ENCODE measurements at regions of chr13 and their contacts with region 1.

Region 1: DNA sequence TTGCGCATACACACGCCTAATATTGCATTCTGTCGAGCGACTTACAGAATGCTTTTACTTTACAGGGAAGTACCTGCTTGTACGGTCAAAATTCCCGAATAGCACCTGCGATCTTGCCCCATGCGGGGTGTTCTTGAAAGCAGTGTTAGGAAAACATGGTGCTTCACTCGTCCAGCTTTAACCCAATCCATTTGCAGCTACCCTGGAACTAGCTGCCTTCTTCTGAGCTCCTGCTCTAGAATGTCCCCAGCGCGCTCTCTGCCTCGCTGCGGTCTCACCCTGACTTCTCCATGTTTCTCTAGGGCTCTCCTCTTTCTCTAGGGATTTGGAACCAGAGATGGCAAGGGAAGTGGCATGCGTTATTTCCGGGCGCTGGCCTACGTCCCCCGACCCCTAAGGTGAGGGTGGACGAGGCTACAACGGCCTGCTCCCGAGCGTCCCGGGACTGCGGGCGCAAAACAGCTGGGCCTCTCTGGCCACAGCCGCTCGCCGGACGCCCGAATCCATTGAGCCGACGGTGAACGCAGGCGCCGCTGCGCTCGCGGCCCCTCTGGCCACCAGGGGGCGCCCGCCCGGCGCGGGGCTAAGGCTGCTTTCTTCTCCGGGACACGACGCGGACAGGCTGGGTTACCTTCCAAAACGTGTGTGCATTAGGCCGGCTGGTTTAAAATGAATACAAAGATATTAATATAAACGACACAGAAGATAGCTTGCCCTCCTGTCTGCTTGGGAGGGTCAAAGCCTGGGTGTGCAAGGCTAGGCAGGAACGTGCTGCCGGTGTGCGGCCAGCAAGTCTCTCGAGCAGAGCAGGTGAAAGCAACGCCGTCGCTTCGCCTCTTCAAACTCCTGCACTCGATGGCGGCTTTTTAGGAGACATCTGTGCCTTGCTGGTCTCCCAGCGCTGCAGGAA is 1.8 kb upstream of the SPRY2 start:
- DNase-seq: no peak
- H3K4me3 ChIP-seq: peak overlapping the region; percentile 100
- CTCF ChIP-seq: peak; percentile 87

Region 2: DNA sequence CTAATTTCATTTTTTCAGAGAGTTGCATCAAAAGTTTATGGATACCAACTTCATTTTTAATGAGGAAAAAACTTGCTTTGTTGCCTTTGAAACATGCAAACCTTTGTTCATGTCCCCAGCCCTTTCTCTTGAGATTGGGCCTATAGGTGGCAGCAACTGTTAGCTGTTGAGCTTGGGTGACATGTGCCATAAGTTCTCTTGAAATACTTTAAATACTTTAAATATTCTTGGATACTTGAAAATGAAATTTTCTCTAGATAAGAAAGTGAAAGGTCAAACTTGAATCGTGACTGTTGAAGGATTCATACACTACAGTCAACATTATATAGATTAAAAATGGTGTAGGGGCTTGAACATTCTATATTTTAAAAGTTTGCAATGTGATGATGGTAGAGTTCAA is 566.9 kb before region 1 on chr13:
- in situ Hi-C with region 1: loop called (anchors 25 kb)
- DNase-seq: peak; percentile 63
- H3K4me3 ChIP-seq: no peak overlapping the region
- CTCF ChIP-seq: peak; percentile 72

Region 3: DNA sequence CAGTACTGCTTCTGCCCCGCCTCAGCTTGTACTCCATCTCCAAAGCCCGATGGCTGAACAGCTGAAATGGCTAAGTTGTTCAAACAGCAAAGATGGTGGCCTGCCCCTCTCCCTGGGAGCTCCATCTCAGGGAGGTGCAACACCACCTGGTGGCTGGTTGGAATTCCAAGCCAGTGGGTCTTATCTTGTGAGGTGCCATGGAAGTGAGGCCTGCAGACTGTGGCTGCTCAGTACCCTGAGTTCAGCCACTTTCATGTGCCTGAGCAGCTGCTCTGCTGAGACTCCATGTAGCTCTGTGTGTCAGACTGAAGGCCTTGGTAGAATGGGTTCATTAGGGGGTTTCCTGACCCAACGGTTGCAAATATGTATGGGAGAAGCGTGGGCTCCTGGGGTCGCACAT is 65.5 kb after region 1 on chr13:
- in situ Hi-C with region 1: no loop called
- DNase-seq: no peak
- H3K4me3 ChIP-seq: no peak overlapping the region
- CTCF ChIP-seq: no peak

Region 4: DNA sequence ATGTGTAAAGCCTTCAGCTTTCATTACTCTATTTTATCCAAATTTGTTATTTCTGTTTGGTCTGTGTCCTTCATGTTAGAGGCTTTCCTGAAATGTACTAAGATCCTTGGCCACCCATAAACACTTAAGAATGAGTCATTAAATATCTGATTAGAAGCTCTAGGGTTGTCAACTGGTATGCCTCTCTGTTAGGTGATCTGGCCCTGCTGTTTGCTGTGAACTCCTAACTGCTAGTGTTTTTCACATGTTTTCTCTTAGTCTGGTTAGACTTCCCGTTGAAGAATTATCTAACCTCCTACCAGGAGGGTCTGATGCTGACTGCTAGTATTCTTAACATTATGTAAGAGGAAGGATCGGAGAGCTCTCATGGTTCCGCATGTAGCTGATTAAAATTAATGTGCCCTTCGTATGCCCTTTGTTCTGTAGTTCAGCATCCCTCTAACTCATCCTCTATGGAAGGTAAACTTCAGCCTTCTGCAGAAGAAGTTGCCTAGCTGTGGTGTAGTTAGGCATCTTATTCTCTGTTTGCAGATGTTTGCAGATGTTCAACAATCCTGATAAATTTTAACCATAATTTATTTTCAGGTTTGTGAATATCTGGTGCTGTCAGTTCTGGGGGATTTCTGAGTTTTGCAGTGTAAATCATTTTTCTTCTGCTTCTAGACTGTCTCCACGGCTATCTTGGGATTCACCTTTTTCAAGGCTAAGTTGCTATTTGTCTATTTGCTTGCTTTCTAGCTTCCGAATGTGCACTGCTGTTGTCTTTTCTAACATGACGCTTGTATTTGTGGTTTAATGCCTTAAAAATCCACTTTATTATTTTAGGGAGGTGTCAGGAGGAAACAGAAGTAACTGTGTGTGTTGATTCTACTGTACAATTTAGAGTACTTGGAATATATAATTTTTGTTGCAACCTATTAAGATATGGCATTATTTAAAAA is 205.4 kb after region 1 on chr13:
- in situ Hi-C with region 1: no loop called
- DNase-seq: no peak
- H3K4me3 ChIP-seq: no peak overlapping the region
- CTCF ChIP-seq: no peak

Measured in astrocyte of the cerebellum (primary cell).